T-cell (primary cell): ENCODE measurements at regions of chr19 and their contacts with region 1.

Region 1: DNA sequence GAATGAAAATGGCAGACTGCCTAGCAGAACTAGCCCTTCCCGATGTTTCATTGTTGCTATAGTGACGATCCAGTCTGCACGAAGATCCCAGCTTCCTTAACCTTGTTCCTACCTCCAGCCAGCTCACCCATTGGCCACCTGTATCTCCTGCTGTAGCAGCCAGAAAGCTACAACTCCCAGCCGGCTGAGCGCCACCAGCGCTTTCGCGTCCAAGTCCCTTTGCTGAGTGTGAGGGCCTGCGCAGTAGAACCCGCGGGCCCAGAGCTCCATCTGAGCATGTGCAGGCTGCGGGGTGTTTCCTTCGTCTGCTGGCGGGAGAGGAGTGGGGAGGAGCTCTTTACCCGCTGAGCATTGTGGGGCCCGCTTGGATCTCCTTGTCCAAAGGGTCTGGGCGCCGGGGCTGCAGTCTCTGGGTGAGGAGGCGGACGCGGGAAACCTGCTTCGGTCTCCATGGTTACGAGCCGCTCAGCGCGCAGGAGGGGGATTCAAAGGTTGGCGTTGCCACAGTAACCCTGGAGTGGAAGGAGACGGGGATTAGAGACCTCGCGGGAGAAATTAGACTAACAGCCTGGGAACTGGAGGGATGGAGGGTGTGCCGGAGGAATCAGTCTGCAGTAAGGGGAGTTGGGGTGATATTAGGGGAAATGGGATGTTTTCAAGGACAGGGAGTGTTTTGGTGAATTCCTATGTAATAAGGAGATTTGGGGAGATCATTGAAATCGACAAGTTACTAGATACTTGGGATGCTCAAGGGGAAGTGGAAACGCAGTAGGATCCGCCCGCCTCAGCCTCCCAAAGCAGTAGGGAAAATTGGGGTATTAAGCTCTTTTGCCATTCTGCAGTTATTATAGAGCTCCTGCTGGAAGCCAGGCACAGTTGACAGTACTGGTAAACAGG is 33.5 kb downstream of the ZSWIM9 start:
- DNase-seq: peak; percentile 72 to 93 (median 86)
- ATAC-seq: peak; percentile 99 to 100 (median 100)
- H3K4me3 ChIP-seq: peak overlapping the region; percentile 82 to 84
- H3K4me3 Mint-ChIP-seq: no peak overlapping the region
- H3K27ac ChIP-seq: peak overlapping the region; percentile 60
- H3K27ac Mint-ChIP-seq: no peak overlapping the region
- H3K4me1 ChIP-seq: peaks cover 11 to 20% of the 10 kb centered on the region in 2 experiments
- H3K4me1 Mint-ChIP-seq: peaks cover 15 to 28% (median 23%) of the 10 kb centered on the region in 3 donors
- H3K27me3 ChIP-seq: no peaks in the 10 kb centered on the region
- H3K27me3 Mint-ChIP-seq: no peaks in the 10 kb centered on the region

Region 2: DNA sequence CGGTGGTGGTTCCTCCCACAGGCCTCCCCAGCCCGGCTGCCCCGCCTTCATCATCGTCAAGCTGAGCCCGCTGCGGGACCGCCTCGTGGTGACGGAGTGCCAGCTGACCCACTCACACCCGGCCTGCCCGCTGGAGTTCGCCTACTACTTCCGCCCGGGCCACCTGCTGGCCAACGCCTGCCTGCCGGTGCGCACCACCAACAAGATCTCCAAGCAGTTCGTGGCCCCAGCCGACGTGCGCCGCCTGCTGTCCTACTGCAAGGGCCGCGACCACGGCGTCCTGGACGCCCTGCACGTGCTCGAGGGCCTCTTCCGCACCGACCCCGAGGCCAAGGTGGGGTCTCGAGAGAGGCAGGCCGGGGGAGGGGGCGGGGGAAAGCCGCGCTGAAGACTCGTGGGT is 21.5 kb before region 1 on chr19:
- CTCF ChIA-PET with region 1: no interaction called
- POLR2A ChIA-PET with region 1: no interaction called
- DNase-seq: no peak
- ATAC-seq: no peak
- H3K4me3 ChIP-seq: no peak overlapping the region
- H3K4me3 Mint-ChIP-seq: no peak overlapping the region
- H3K27ac ChIP-seq: no peak overlapping the region
- H3K27ac Mint-ChIP-seq: no peak overlapping the region
- H3K4me1 ChIP-seq: no peaks in the 10 kb centered on the region
- H3K4me1 Mint-ChIP-seq: no peaks in the 10 kb centered on the region
- H3K27me3 ChIP-seq: no peaks in the 10 kb centered on the region
- H3K27me3 Mint-ChIP-seq: no peaks in the 10 kb centered on the region

Region 3: DNA sequence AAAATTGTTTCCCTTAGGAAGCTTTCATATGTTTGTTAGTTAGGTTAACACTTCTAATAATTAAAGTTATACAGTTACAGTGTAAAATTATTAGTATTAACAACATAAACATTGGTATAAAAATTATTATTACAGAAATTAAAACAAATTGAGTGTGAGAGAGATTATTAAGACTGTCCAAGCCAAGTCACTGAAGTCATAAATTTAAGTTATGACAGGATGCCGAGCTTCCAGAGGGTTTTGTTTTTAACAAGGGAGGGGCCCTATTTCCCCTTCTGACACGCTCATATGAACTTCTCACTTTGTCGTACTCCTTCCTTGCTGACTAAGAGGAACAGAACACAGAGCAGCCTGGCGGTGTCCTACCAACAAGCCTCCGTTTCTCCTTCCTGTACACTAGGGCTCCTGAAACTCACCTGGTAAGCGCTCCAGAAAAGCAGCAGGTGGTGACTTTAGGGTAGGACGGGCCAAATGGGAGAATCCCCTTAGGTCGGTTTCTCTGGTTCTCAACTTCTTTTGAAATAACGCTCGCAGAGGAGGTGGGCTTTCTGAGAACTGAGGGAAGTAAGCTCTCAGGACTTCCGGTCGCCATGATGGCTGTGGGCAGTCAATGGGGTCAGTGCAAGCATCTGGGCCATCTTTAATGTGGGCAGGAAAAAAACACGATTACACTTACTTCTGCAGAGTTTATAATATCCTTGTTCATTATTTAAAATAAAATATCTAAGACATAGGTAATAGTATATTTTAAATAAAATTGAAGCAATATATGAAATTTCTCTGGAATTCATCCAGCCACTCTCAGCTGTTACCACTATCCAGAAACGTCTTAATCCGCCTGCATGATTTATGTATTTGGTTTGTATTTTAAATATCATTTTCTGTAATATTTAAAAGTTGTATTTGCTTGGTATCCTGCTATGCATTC is 51.7 kb after region 1 on chr19 and contains the start of gene CARD8:
- CTCF ChIA-PET with region 1: interaction called in 1 of 2 experiments, 19 read pairs
- POLR2A ChIA-PET with region 1: interaction called, 4 to 5 read pairs
- DNase-seq: peak; percentile 67 to 90 (median 78)
- ATAC-seq: peak; percentile 85 to 88 (median 87)
- H3K4me3 ChIP-seq: peak within 1 kb of the TSS; percentile 63 to 85
- H3K4me3 Mint-ChIP-seq: peak within 1 kb of the TSS; percentile 94 to 99 (median 94)
- H3K27ac ChIP-seq: peak within 1 kb of the TSS; percentile 76
- H3K27ac Mint-ChIP-seq: peak within 1 kb of the TSS; percentile 98 to 99
- H3K4me1 ChIP-seq: peaks cover 23 to 56% of the 10 kb centered on the region in 2 experiments
- H3K4me1 Mint-ChIP-seq: peaks cover 71 to 81% (median 75%) of the 10 kb centered on the region in 3 donors
- H3K27me3 ChIP-seq: no peaks in the 10 kb centered on the region
- H3K27me3 Mint-ChIP-seq: no peaks in the 10 kb centered on the region
- total RNA-seq, gene CARD8: 146 to 224 (median 191) TPM

Region 4: DNA sequence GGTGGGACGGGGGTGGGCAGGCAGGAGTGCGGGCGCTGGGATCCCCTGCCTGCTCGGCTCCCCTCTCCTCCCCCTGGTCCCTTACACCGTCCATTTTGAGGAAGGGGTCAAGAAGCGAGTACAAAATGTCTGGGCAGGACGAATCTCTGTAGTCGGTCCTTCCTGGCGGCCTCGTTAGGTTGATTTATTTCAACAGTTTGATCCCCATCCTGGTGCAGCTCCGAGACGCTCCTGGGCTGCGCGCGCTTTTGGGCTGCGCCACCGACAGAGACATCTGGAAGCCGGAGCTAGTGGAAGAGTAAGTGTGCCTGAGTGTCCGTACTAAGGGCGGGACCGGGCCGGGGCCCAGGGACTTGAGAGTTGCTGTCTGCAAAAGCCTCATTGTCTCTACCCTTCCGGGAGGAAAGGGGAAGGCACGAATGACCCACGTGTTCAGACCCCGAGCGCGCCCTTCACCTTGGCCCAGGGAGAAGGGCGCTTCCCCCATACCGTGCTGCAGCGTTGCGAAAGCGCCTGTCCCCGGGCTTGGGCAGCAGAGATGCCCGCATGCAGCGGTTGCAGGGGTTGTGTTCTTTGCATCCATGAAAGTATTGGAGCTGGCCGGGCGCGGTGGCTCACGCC is 67.7 kb after region 1 on chr19:
- CTCF ChIA-PET with region 1: interaction called in 1 of 2 experiments, 10 read pairs
- POLR2A ChIA-PET with region 1: no interaction called
- DNase-seq: peak in 4 of 35 experiments; percentile 2 to 14 (median 10)
- ATAC-seq: peak; percentile 35 to 58 (median 40)
- H3K4me3 ChIP-seq: peak overlapping the region; percentile 15 to 71
- H3K4me3 Mint-ChIP-seq: peak overlapping the region; percentile 83 to 86 (median 85)
- H3K27ac ChIP-seq: no peak overlapping the region
- H3K27ac Mint-ChIP-seq: no peak overlapping the region
- H3K4me1 ChIP-seq: peaks cover 6 to 18% of the 10 kb centered on the region in 2 experiments
- H3K4me1 Mint-ChIP-seq: peaks cover 14 to 22% (median 22%) of the 10 kb centered on the region in 3 donors
- H3K27me3 ChIP-seq: peaks cover 0 to 34% of the 10 kb centered on the region in 2 experiments
- H3K27me3 Mint-ChIP-seq: peaks cover 8 to 24% of the 10 kb centered on the region in 2 donors